ENCODE measurements at regions of chr10 and their contacts with region 1.

Region 1: DNA sequence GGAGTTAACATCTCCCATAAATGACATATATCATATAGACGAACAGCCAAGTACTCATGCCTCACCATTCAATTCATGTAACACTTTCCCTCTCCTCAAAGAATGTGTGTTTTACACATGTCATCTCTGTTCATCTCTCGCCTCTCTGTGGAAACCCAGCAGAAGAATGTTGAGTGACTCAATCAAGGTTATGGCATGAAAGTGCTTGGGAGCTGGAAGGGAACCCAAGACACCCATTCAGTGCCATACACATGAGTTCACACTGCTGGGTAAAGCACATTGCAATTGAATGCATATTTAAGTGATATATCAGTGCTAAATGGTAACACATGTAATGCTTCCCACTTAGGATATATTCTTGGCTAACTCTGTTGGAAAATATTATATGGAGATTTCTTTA is 322.9 kb downstream of the PTEN start:
- DNase-seq: no peak
- ATAC-seq: no peak
- H3K4me3 Mint-ChIP-seq: no peak overlapping the region
- H3K27ac Mint-ChIP-seq: no peak overlapping the region
- H3K4me1 Mint-ChIP-seq: peaks cover 2% of the 10 kb centered on the region
- H3K27me3 Mint-ChIP-seq: no peaks in the 10 kb centered on the region
- CTCF ChIP-seq: no peak

Region 2: GRCh38 chr10:88150339-88150738 is 36.0 kb before region 1 on chr10:
- CTCF ChIA-PET with region 1: no interaction called
- POLR2A ChIA-PET with region 1: no interaction called
- intact Hi-C with region 1: no loop called
- DNase-seq: no peak
- ATAC-seq: no peak
- H3K4me3 Mint-ChIP-seq: no peak overlapping the region
- H3K27ac Mint-ChIP-seq: no peak overlapping the region
- H3K4me1 Mint-ChIP-seq: peaks cover 12% of the 10 kb centered on the region
- H3K27me3 Mint-ChIP-seq: no peaks in the 10 kb centered on the region
- CTCF ChIP-seq: no peak

Region 3: DNA sequence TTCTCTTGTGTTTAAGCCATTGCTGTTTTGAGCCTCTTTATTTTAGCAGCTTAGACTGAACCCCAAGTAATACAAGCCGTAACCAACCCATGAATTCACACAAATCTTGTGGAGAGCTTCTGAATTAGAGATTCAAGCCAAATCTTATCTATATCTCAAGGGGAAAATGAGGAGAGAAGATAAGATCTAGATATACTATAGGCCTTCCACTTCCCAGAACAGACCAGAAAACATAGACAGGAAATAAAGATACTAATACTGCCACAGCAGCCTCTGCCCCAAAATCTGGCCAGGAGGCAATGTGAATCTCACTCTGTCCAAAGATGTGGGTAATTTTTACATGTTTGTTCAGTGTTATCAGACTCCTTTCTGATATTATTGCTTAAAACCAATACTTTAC is 15.7 kb before region 1 on chr10:
- CTCF ChIA-PET with region 1: no interaction called
- POLR2A ChIA-PET with region 1: no interaction called
- intact Hi-C with region 1: loop called (anchors 2 kb)
- DNase-seq: no peak
- ATAC-seq: no peak
- H3K4me3 Mint-ChIP-seq: no peak overlapping the region
- H3K27ac Mint-ChIP-seq: no peak overlapping the region
- H3K4me1 Mint-ChIP-seq: peaks cover 8% of the 10 kb centered on the region
- H3K27me3 Mint-ChIP-seq: no peaks in the 10 kb centered on the region
- CTCF ChIP-seq: no peak